ENCODE measurements at regions of chr17 and their contacts with region 1.

Region 1: DNA sequence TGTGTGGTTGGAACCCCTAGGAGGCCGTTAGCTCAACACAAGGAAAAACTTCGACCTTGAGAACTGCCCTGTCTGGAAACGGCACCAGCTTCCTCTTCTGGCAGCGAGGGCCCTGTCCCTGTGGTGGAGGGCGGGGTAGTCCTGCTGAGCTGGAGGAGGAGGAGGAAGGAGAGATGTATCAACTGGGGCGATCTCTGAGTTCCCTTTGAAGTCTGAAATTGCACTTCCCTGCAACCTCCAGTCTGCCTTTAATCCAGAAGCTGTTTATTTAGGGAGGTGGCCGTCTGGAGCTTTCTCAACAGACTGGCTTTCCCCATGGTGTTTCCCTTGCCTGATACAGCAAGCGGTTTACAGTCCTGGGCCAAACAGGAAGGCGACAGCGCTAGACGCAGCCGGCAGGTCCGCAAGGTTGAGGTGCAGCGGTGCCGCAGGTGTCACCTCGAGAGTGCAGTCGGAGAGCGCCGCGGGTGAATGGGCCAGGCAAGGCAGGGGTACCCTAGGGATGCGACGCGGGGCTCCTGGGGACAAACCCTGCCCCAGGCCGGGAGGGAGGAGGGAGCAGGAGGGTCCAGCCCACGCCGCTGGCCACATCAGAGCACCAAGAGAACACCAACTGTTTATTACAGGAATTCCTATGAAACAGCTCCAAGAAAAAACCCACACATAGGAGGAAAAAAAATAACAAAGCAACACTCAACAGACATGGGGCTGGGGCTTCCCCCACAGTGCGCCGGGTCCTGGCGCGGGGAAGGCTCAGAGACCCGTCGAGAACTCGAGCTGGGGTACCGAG is 11.4 kb upstream of the MRPS23 start:
- DNase-seq: peak; percentile 85
- ATAC-seq: peak; percentile 55

Region 2: DNA sequence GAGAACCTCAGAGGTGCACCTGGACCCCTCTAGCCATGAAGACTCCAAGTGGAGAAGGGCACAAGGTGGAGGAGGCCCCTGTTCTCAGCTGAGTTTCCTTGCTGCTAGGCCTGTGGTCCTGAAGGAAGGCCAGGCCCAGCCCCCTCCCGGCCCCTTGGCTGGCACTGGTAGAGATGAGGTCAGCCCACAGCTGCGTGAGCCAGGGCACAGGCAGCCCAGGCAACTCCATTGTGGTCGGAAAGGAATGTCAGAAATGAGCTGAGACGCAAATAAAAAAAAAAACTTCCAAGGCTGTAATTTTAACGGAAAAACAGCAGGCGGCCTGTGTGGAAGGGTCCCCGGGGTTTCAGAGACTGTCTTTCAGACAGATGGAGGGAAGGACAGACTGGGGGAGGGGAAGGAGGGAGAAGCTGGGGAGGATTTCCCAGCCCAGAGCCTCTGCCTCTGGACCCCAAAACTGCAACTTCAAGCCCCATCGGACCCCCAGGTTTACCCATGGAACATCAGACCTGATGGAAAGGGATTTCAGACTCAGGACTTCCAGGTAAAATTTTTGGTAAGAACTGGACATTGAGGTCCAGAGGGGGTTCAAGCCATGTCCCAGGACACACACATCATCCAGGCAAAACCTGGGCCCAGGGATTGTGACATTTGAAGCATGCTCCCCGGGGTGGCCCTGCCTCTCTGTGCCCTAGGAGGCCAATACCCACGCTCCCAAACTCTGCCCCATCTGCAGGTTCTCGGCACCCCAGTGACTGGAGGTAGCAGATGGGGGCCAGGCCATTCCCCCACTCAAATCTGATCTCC is 14.3 kb after region 1 on chr17:
- intact Hi-C with region 1: loop called (anchors 2 kb)
- DNase-seq: peak; percentile 86
- ATAC-seq: peak; percentile 84

Region 3: GRCh38 chr17:57995076-57995956 is 134.1 kb after region 1 on chr17:
- intact Hi-C with region 1: loop called (anchors 2 kb)
- DNase-seq: no peak
- ATAC-seq: peak; percentile 93